Caco-2 (cell line): ENCODE measurements at regions of chr3 and their contacts with region 1.

Region 1: GRCh38 chr3:190224863-190225692 is 97.2 kb downstream of the CLDN1 start:
- DNase-seq: peak in 1 of 2 experiments; percentile 41
- H3K4me3 ChIP-seq: no peak overlapping the region
- H3K4me3 Mint-ChIP-seq: no peak overlapping the region
- H3K27ac Mint-ChIP-seq: no peak overlapping the region
- H3K4me1 ChIP-seq: no peaks in the 10 kb centered on the region
- H3K4me1 Mint-ChIP-seq: peaks cover 7% of the 10 kb centered on the region
- H3K27me3 ChIP-seq: no peaks in the 10 kb centered on the region
- H3K27me3 Mint-ChIP-seq: no peaks in the 10 kb centered on the region
- CTCF ChIP-seq: peak in 1 of 2 experiments; percentile 53

Region 2: GRCh38 chr3:190321789-190322603 is 96.9 kb after region 1 on chr3 and contains the start of gene CLDN1:
- CTCF ChIA-PET with region 1: interaction called, 28 read pairs
- POLR2A ChIA-PET with region 1: no interaction called
- intact Hi-C with region 1: loop called (anchors 1 kb)
- DNase-seq: peak; percentile 83 to 92
- H3K4me3 ChIP-seq: peak within 1 kb of the TSS; percentile 66
- H3K4me3 Mint-ChIP-seq: peak within 1 kb of the TSS; percentile 81
- H3K27ac Mint-ChIP-seq: peak within 1 kb of the TSS; percentile 56
- H3K4me1 ChIP-seq: peaks cover 9% of the 10 kb centered on the region
- H3K4me1 Mint-ChIP-seq: peaks cover 29% of the 10 kb centered on the region
- H3K27me3 ChIP-seq: no peaks in the 10 kb centered on the region
- H3K27me3 Mint-ChIP-seq: no peaks in the 10 kb centered on the region
- CTCF ChIP-seq: peak; percentile 92 to 96
- total RNA-seq, gene CLDN1: 38.9 and 39.3 TPM in 2 replicates

Region 3: GRCh38 chr3:190424478-190425439 is 199.7 kb after region 1 on chr3:
- CTCF ChIA-PET with region 1: interaction called, 4 read pairs
- POLR2A ChIA-PET with region 1: no interaction called
- intact Hi-C with region 1: loop called (anchors 1 kb)
- DNase-seq: peak; percentile 75 to 76
- H3K4me3 ChIP-seq: no peak overlapping the region
- H3K4me3 Mint-ChIP-seq: no peak overlapping the region
- H3K27ac Mint-ChIP-seq: no peak overlapping the region
- H3K4me1 ChIP-seq: no peaks in the 10 kb centered on the region
- H3K4me1 Mint-ChIP-seq: no peaks in the 10 kb centered on the region
- H3K27me3 ChIP-seq: no peaks in the 10 kb centered on the region
- H3K27me3 Mint-ChIP-seq: peaks cover 2% of the 10 kb centered on the region
- CTCF ChIP-seq: peak; percentile 57 to 66

Region 4: GRCh38 chr3:190443257-190443656 is 218.2 kb after region 1 on chr3:
- CTCF ChIA-PET with region 1: no interaction called
- POLR2A ChIA-PET with region 1: no interaction called
- intact Hi-C with region 1: loop called (anchors 5 kb)
- DNase-seq: peak in 1 of 2 experiments; percentile 9
- H3K4me3 ChIP-seq: no peak overlapping the region
- H3K4me3 Mint-ChIP-seq: no peak overlapping the region
- H3K27ac Mint-ChIP-seq: no peak overlapping the region
- H3K4me1 ChIP-seq: peaks cover 20% of the 10 kb centered on the region; the same call in 1 of the 2 replicates
- H3K4me1 Mint-ChIP-seq: peaks cover 15% of the 10 kb centered on the region
- H3K27me3 ChIP-seq: no peaks in the 10 kb centered on the region
- H3K27me3 Mint-ChIP-seq: no peaks in the 10 kb centered on the region
- CTCF ChIP-seq: peak in 1 of 2 experiments; percentile 36

Region 5: DNA sequence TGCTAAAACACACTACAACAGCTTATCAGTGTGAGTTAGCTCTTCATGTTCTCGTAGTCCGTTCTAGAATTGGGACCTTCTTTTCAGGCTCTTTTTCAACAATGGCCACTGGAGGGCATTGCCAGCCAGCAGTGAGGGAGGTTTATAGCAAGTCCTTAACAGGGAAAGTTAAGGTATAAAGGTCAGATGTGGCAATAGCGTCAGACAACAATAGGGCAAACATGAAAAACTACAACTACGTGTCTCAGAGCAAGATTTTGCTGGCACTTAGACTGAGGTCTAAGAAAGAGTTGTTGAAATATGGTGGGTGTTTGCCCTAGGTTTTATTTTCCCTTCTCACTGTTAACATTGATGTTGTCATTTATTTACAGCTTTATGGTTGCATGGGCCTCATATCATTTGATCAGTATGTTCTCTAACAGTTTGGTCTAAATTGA is 476.0 kb after region 1 on chr3:
- CTCF ChIA-PET with region 1: no interaction called
- POLR2A ChIA-PET with region 1: no interaction called
- intact Hi-C with region 1: loop called (anchors 10 kb)
- DNase-seq: peak; percentile 69 to 73
- H3K4me3 ChIP-seq: no peak overlapping the region
- H3K4me3 Mint-ChIP-seq: no peak overlapping the region
- H3K27ac Mint-ChIP-seq: no peak overlapping the region
- H3K4me1 ChIP-seq: peaks cover 5% of the 10 kb centered on the region; the same call in 1 of the 2 replicates
- H3K4me1 Mint-ChIP-seq: no peaks in the 10 kb centered on the region
- H3K27me3 ChIP-seq: no peaks in the 10 kb centered on the region
- H3K27me3 Mint-ChIP-seq: peaks cover 5% of the 10 kb centered on the region
- CTCF ChIP-seq: peak; percentile 55 to 75